CD14-positive monocyte (primary cell): ENCODE measurements at regions of chr9 and their contacts with region 1.

Region 1: DNA sequence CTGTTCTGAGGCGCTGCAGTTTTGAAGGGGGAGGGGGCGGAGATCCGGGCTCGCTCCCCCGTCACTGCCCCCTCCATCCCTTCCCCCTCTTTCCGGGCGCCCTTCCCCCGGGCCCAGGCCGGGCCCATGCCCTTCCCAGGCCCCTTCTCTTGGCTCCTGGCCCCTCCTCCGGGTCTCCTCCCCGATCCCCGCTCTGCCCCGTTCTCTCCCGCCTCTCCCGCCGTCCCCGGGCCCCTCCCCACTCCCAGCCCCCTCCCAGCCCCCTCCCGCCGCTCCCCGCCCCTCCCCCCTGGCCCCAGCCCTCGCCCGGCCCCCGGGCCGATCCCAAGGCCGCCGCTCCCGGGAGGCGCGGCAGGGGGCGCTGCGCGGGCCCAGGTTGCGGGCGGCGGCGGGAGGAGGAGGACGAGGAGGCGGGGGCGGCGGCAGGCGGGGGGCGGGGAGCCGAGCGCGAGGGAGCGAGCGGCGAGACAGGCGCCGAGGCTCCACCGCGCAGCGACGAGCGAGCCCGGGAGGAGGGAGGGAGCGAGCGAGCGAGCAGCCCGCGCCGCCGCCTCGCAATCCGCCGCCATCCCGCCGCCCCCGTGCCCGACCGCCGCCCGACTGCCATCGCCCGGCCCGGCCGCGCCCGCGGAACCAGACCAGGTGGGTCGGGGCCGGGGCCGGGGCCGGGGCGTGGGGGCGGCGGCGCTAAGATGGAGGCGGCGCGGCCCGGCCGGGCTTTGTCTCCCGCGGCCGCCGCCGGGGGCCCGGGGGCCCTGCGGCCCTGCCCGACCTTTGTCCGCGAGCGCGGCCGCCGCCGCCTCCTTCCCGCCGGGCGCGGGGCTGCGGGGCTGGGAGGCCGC is at the start of gene PRRC2B:
- DNase-seq: peak; percentile 66 to 81 (median 72)
- H3K4me3 ChIP-seq: peak within 1 kb of the TSS; percentile 68 to 94 (median 81)
- H3K4me3 Mint-ChIP-seq: peak within 1 kb of the TSS; percentile 88 to 91
- H3K27ac ChIP-seq: peak within 1 kb of the TSS; percentile 81 to 96
- H3K27ac Mint-ChIP-seq: peak within 1 kb of the TSS; percentile 85 to 93 (median 89)
- H3K4me1 ChIP-seq: peaks cover 47 to 54% of the 10 kb centered on the region in 2 donors
- H3K4me1 Mint-ChIP-seq: peaks cover 52% of the 10 kb centered on the region
- H3K27me3 ChIP-seq: no peaks in the 10 kb centered on the region
- H3K27me3 Mint-ChIP-seq: peaks cover 0 to 1% (median 0%) of the 10 kb centered on the region in 3 donors
- CTCF ChIP-seq: peak; percentile 65
- polyA plus RNA-seq, gene PRRC2B: 2.8 to 36.2 (median 8.6) TPM

Region 2: GRCh38 chr9:131297903-131298302 is 95.9 kb before region 1 on chr9:
- intact Hi-C with region 1: no loop called
- DNase-seq: no peak
- H3K4me3 ChIP-seq: no peak overlapping the region
- H3K4me3 Mint-ChIP-seq: no peak overlapping the region
- H3K27ac ChIP-seq: no peak overlapping the region
- H3K27ac Mint-ChIP-seq: no peak overlapping the region
- H3K4me1 ChIP-seq: no peaks in the 10 kb centered on the region
- H3K4me1 Mint-ChIP-seq: no peaks in the 10 kb centered on the region
- H3K27me3 ChIP-seq: no peaks in the 10 kb centered on the region
- H3K27me3 Mint-ChIP-seq: peaks cover 1 to 4% (median 2%) of the 10 kb centered on the region in 3 donors
- CTCF ChIP-seq: no peak

Region 3: DNA sequence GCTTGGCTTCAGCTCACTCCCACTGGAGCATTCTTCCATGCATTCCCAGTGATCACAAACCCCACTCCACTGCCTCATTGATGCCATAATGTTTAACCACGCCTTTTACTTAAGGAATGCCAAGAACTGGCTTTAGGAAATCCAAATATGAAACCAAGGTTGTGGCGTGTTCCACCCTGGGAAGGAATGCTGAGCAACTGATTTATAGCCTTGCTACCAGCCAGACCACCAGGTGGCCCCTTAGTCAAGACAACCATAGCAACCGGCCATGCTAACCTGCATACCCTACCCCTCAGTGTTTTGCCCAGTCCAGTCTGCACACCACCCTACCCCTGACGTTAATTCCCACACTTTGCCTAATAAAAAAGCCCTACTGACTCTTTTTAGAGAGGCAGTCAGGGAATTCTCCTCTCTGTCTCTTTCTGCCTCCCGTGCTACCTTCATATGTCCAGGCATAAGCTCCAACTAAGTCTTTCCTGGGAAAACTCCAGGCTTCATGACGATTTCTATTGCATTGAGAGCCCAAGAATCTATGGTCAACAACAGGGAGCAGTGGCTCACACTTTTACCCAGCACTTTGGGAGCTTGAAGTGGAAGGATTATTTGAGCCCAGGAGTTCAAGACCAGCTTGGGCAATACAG is 27.0 kb before region 1 on chr9:
- intact Hi-C with region 1: loop called in 1 of 2 experiments (anchors 2 kb)
- DNase-seq: no peak
- H3K4me3 ChIP-seq: no peak overlapping the region
- H3K4me3 Mint-ChIP-seq: no peak overlapping the region
- H3K27ac ChIP-seq: no peak overlapping the region
- H3K27ac Mint-ChIP-seq: peak overlapping the region in 1 of 7 donors; percentile 46
- H3K4me1 ChIP-seq: peaks cover under 1 to 1% of the 10 kb centered on the region in 2 donors
- H3K4me1 Mint-ChIP-seq: no peaks in the 10 kb centered on the region
- H3K27me3 ChIP-seq: no peaks in the 10 kb centered on the region
- H3K27me3 Mint-ChIP-seq: peaks cover 1 to 3% (median 2%) of the 10 kb centered on the region in 3 donors
- CTCF ChIP-seq: no peak